PC-3 (cell line): ENCODE measurements at regions of chr20 and their contacts with region 1.

Region 1: DNA sequence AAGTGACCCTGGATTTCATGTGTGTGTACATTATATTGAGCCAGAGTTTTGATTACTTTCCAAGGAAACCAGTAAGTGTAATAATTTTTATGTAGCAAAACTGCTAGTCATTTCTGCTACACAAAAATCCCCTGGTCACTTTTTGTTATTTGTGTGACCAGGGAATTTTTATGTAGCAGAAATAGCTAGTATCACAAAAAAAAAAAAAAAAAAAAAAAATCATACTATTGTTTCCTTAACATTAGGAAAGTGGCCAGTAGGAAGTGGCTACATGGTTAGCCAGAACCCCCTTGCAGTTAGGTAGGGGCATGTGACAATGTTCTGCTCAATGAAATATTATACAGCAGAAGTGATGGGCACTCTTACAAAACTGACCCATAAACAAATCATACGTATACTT is 434.0 kb upstream of the BTBD3 start:
- DNase-seq: no peak
- ATAC-seq: no peak
- H3K4me3 ChIP-seq: no peak overlapping the region
- H3K27ac ChIP-seq: no peak overlapping the region
- H3K4me1 ChIP-seq: no peaks in the 10 kb centered on the region
- H3K27me3 ChIP-seq: no peaks in the 10 kb centered on the region
- CTCF ChIP-seq: no peak

Region 2: GRCh38 chr20:11387189-11387754 is 96.4 kb before region 1 on chr20:
- CTCF ChIA-PET with region 1: no interaction called
- POLR2A ChIA-PET with region 1: no interaction called
- intact Hi-C with region 1: no loop called
- DNase-seq: peak; percentile 87
- ATAC-seq: peak; percentile 53
- H3K4me3 ChIP-seq: no peak overlapping the region
- H3K27ac ChIP-seq: peak overlapping the region; percentile 65
- H3K4me1 ChIP-seq: peaks cover 24% of the 10 kb centered on the region
- H3K27me3 ChIP-seq: no peaks in the 10 kb centered on the region
- CTCF ChIP-seq: no peak

Region 3: DNA sequence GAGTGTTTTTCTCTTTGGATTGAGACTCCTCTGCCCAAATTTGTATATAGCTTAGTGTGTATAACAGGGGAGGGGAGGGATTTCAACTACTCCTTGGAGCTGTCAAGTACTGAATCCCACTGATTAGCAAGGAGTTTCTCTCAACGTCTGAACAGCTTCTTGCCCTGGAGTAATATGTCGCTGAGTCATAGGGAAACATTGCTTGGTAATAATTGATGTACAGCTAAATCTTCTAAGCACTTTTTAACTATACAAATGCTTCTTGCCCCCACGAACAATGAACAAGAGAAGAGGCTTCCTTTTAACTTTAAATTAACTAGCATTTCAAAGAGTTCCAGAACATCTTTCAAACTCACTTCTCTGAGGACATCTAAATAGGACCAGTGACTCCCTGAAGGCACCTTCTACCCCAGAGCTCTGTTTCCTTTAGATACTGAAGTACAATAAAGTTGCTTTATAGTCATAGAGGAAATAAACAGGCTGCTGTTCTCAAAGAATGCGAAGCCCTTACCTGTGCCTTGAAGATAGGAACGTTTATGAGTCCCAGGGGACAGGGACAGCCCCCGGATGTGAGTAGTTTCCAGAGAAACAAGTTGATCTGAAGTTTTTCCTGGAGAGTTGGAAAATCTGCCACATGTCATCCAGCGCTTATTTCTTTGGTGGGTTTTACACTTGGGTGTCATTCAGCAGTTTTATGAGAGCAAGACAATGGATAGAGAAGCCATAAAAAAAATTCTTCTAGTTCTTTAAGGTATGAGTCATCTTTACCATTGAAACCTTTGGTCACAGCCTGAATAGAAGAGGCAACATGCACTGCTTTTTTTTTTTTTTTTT is 28.5 kb before region 1 on chr20:
- CTCF ChIA-PET with region 1: no interaction called
- POLR2A ChIA-PET with region 1: interaction called, 11 read pairs
- intact Hi-C with region 1: no loop called
- DNase-seq: peak; percentile 97
- ATAC-seq: peak; percentile 80
- H3K4me3 ChIP-seq: peak overlapping the region; percentile 24; the same call in 1 of the 2 replicates
- H3K27ac ChIP-seq: peak overlapping the region; percentile 75
- H3K4me1 ChIP-seq: peaks cover 44% of the 10 kb centered on the region
- H3K27me3 ChIP-seq: no peaks in the 10 kb centered on the region
- CTCF ChIP-seq: no peak